RWPE1 (cell line): ENCODE measurements at regions of chr4 and their contacts with region 1.

Region 1: GRCh38 chr4:69156913-69157312 is 57.6 kb downstream of the UGT2B11 start:
- DNase-seq: no peak
- H3K27ac ChIP-seq: no peak overlapping the region
- CTCF ChIP-seq: no peak

Region 2: GRCh38 chr4:69095301-69095731 is 61.6 kb before region 1 on chr4:
- CTCF ChIA-PET with region 1: interaction called, 11 read pairs
- POLR2A ChIA-PET with region 1: no interaction called
- DNase-seq: peak; percentile 59
- H3K27ac ChIP-seq: no peak overlapping the region
- CTCF ChIP-seq: no peak